Calu3 (cell line): ENCODE measurements at regions of chr5 and their contacts with region 1.

Region 1: DNA sequence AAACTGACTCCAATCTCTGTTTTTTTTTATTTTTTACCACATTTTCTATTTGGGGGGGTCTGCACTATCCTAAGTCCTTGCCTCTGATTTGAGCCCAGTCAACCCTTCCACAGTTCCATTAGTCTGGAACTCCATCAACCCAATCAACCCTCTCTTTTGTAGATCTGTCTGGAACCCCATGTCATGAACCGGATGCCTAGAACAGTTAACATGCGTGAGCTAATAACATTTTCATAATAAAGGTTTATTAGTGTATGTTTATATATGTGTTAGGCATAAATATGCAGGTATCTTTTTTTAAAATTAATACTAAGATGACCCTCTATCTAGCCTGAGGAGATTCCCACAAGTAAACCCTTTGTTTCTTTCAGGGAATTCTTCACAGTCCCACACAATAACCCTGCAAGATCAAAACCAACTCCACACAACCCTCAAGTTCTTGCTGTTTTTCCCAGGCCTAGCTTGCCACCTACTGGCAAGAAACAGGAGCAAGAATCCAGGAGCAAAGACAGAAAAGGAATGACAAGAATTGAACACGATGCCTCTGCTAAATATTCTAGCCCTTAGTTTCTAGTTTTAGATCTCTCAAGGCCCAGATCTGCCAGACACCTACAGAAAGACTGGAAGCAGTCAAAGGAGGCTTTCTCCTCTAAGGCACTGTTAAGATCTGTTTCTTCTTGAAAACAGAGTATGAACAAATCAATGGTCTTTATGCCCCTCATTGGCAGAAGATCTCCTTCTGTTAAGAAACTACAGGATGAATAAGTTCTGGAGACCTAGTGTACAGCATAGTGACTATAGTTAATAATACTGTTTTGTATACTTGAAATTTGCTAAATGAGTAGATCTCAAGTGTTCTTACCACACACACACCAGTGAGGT is 100.4 kb downstream of the TRIM36 start:
- DNase-seq: peak; percentile 51
- H3K4me3 Mint-ChIP-seq: no peak overlapping the region
- H3K27ac Mint-ChIP-seq: no peak overlapping the region
- H3K4me1 Mint-ChIP-seq: peaks cover 7% of the 10 kb centered on the region
- H3K27me3 Mint-ChIP-seq: no peaks in the 10 kb centered on the region
- CTCF ChIP-seq: no peak

Region 2: GRCh38 chr5:114803353-114803752 is 266.0 kb before region 1 on chr5:
- CTCF ChIA-PET with region 1: no interaction called
- intact Hi-C with region 1: loop called (anchors 1 kb)
- DNase-seq: no peak
- H3K4me3 Mint-ChIP-seq: no peak overlapping the region
- H3K27ac Mint-ChIP-seq: no peak overlapping the region
- H3K4me1 Mint-ChIP-seq: no peaks in the 10 kb centered on the region
- H3K27me3 Mint-ChIP-seq: no peaks in the 10 kb centered on the region
- CTCF ChIP-seq: no peak